Breast epithelium (tissue), 4 donors: ENCODE measurements at regions of chr1 and their contacts with region 1.

Region 1: DNA sequence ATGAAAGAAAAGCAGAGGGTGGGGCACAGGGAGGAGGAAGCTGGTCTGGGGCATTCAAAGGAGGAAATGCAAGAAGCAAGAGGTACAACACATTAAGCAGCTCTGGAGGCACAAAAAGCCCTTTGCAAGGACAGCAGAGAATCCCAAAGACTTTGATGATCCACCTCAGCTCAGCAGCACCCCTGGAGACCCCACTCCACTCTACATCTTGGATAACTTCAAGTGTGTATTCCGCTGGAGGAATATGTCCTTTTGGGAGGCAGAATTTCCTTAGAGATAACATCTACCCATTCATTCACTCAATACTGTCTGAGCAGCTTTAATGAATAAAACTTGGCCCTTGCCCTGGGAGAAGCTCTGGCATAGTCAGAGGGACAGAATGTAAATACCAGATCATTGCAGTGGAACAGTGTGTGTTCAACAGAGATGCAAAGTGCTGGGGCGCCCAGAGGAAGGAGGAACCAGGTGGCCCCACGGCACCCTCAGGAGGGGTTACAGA is 599.7 kb downstream of the KIF26B start:
- DNase-seq: no peak
- H3K4me3 ChIP-seq: no peak overlapping the region
- H3K27ac ChIP-seq: no peak overlapping the region
- H3K4me1 ChIP-seq: no peaks in the 10 kb centered on the region
- H3K27me3 ChIP-seq: no peaks in the 10 kb centered on the region
- CTCF ChIP-seq: no peak
- POLR2A ChIP-seq: no peak

Region 2: DNA sequence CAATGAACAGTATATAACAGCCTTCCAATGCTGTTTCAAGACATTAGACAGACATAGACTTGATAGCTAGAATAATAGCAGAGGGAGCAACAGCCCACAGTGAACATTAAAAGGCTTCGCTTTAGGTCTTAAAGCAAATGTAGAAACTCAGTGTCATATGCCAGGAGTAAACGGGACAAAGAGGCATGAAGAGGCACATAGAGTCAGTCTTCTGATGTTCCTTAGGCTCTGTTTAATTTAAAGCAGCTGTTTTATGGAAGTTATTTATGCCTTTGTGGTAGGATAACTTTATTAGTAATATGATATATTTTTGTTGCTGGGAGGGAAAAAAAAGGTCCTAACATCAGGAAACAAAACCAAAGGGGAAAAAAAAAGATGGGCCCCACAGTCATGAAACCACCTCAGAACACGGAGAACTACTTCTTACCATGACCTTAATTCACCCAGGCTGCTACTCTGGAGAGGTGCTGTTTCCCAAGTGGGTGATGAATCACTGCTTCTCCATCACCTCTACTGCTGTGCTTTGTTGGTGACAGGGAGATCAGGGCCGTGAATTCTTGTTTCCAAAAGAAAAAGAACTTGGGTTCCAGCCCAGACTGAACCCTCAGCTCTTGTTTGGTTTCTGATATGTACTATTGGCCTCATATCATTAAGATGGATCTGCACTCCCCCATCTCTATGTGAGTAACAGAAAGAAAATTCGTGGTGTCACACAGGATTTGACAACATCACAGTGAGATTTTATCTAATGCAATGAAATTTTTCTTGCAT is 17.2 kb after region 1 on chr1:
- intact Hi-C with region 1: no loop called
- DNase-seq: no peak
- H3K4me3 ChIP-seq: no peak overlapping the region
- H3K27ac ChIP-seq: no peak overlapping the region
- H3K4me1 ChIP-seq: no peaks in the 10 kb centered on the region
- H3K27me3 ChIP-seq: no peaks in the 10 kb centered on the region
- CTCF ChIP-seq: no peak
- POLR2A ChIP-seq: no peak

Region 3: DNA sequence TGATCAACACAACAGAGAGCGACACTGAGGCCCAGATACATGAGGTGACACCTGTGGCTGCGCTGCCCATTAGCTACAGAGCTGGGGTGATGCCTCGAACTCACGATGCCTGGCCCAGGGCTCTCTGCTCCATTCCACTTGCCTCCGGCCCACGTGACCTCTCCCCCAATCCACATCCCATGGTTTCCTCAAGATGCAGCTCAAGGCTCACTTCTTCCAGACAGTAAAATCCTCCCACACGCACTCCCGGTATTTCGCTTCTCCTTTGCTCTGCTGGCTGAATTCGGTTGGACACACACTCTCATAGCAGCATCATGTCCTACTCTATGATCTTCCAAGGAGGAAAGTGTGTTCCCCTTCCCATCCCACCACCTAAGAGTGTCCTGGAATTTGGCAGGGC is 72.8 kb after region 1 on chr1:
- intact Hi-C with region 1: loop called (anchors 2 kb)
- DNase-seq: no peak
- H3K4me3 ChIP-seq: no peak overlapping the region
- H3K27ac ChIP-seq: no peak overlapping the region
- H3K4me1 ChIP-seq: no peaks in the 10 kb centered on the region
- H3K27me3 ChIP-seq: no peaks in the 10 kb centered on the region
- CTCF ChIP-seq: no peak
- POLR2A ChIP-seq: no peak